K562 (cell line): ENCODE measurements at regions of chr7 and their contacts with region 1.

Region 1: DNA sequence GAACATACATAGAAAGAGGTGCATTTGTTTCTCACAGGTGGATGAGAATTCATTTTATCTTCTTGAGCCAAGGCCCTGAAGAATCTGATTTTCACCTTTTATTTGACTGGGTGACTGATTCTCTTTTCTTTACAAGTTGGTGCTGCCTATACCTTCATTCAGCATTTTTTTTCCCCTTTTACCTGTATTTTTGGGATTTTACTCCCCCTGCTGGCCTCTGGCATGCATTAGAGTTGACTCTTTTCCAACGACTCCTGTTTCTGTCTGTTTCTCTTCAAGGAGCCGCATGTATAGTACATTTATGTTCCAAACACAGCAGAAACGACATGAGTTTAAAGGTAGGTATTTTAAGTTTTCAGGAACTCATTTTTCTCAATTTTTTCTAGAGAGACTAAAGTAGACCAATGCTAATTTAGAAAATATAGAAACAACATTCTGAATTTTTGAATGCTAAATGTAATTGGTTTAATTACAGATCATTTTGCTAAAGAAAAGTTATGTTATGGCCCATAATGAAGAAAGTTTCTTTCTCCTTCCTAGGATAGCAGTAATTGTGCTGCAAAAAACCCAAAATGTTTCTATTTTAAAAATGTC is 149.8 kb upstream of the HDAC9 start:
- DNase-seq: peak; percentile 19 to 61 (median 27)
- ATAC-seq: peak; percentile 81
- H3K4me3 ChIP-seq: no peak overlapping the region
- H3K27ac ChIP-seq: no peak overlapping the region
- H3K4me1 ChIP-seq: no peaks in the 10 kb centered on the region
- H3K27me3 ChIP-seq: no peaks in the 10 kb centered on the region
- CTCF ChIP-seq: peak; percentile 69 to 82 (median 73)
- EP300 ChIP-seq: no peak
- POLR2A ChIP-seq: no peak
- RAD21 ChIP-seq: peak; percentile 88 to 90

Region 2: GRCh38 chr7:17706734-17707133 is 639.0 kb before region 1 on chr7:
- CTCF ChIA-PET with region 1: no interaction called
- POLR2A ChIA-PET with region 1: no interaction called
- in situ Hi-C with region 1: no loop called
- intact Hi-C with region 1: loop called (anchors 2 kb)
- DNase-seq: peak; percentile 31 to 70 (median 45)
- ATAC-seq: peak; percentile 91
- H3K4me3 ChIP-seq: no peak overlapping the region
- H3K27ac ChIP-seq: no peak overlapping the region
- H3K4me1 ChIP-seq: no peaks in the 10 kb centered on the region
- H3K27me3 ChIP-seq: no peaks in the 10 kb centered on the region
- CTCF ChIP-seq: peak; percentile 60 to 74 (median 62)
- EP300 ChIP-seq: no peak
- POLR2A ChIP-seq: no peak
- RAD21 ChIP-seq: peak; percentile 73 to 85

Region 3: GRCh38 chr7:17971411-17971810 is 374.3 kb before region 1 on chr7:
- CTCF ChIA-PET with region 1: interaction called, 5 read pairs
- POLR2A ChIA-PET with region 1: no interaction called
- in situ Hi-C with region 1: no loop called
- intact Hi-C with region 1: loop called (anchors 5 kb)
- DNase-seq: no peak
- ATAC-seq: no peak
- H3K4me3 ChIP-seq: no peak overlapping the region
- H3K27ac ChIP-seq: no peak overlapping the region
- H3K4me1 ChIP-seq: no peaks in the 10 kb centered on the region
- H3K27me3 ChIP-seq: no peaks in the 10 kb centered on the region
- CTCF ChIP-seq: peak in 1 of 3 experiments; percentile 27; a peak in 1 of 6 replicates
- EP300 ChIP-seq: no peak
- POLR2A ChIP-seq: no peak
- RAD21 ChIP-seq: 0 out of 4 replicates have a peak, but pooled peaks of 1 of the 2 experiments have one; percentile 9

Region 4: GRCh38 chr7:18064242-18064838 is 281.4 kb before region 1 on chr7:
- CTCF ChIA-PET with region 1: interaction called, 3 read pairs
- POLR2A ChIA-PET with region 1: no interaction called
- in situ Hi-C with region 1: loop called (anchors 25 kb)
- intact Hi-C with region 1: loop called (anchors 1 kb)
- DNase-seq: peak; percentile 23 to 54 (median 30)
- ATAC-seq: peak; percentile 95
- H3K4me3 ChIP-seq: no peak overlapping the region
- H3K27ac ChIP-seq: no peak overlapping the region
- H3K4me1 ChIP-seq: no peaks in the 10 kb centered on the region; a peak in 1 of 5 replicates
- H3K27me3 ChIP-seq: no peaks in the 10 kb centered on the region
- CTCF ChIP-seq: peak; percentile 65 to 75 (median 72)
- EP300 ChIP-seq: no peak
- POLR2A ChIP-seq: no peak
- RAD21 ChIP-seq: peak; percentile 69 to 92

Region 5: GRCh38 chr7:18119985-18120384 is 225.8 kb before region 1 on chr7:
- CTCF ChIA-PET with region 1: no interaction called
- POLR2A ChIA-PET with region 1: no interaction called
- in situ Hi-C with region 1: no loop called
- intact Hi-C with region 1: loop called (anchors 10 kb)
- DNase-seq: no peak
- ATAC-seq: peak; percentile 48
- H3K4me3 ChIP-seq: no peak overlapping the region
- H3K27ac ChIP-seq: no peak overlapping the region
- H3K4me1 ChIP-seq: no peaks in the 10 kb centered on the region; a peak in 1 of 5 replicates
- H3K27me3 ChIP-seq: no peaks in the 10 kb centered on the region
- CTCF ChIP-seq: peak in 2 of 3 experiments; percentile 19 to 28; a peak in 2 of 6 replicates
- EP300 ChIP-seq: no peak
- POLR2A ChIP-seq: no peak
- RAD21 ChIP-seq: peak in 1 of 2 experiments; percentile 22; a peak in 2 of 4 replicates

Region 6: DNA sequence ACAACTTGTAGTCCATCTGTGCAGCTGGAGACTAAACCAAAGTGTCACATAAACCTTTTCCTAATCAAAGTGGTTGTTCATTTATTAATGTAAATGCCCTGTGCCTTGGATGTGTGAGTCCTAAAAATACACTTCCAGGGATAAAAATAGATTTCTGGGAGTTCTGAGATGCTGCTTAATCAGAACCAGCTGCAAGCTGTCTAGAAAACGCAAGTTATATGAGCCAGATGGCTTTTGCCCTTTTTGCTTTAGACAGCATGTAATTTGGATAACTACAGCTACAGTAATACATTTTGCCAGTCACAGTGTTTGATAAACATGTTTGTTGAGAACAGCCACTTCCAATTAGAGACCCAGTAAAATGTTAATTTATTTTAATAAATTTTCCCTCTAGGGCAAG is 133.0 kb before region 1 on chr7:
- CTCF ChIA-PET with region 1: no interaction called
- POLR2A ChIA-PET with region 1: no interaction called
- in situ Hi-C with region 1: no loop called
- intact Hi-C with region 1: loop called (anchors 2 kb)
- DNase-seq: no peak
- ATAC-seq: no peak
- H3K4me3 ChIP-seq: no peak overlapping the region
- H3K27ac ChIP-seq: no peak overlapping the region
- H3K4me1 ChIP-seq: no peaks in the 10 kb centered on the region; a peak in 1 of 5 replicates
- H3K27me3 ChIP-seq: no peaks in the 10 kb centered on the region
- CTCF ChIP-seq: no peak
- EP300 ChIP-seq: no peak
- POLR2A ChIP-seq: no peak
- RAD21 ChIP-seq: no peak

Region 7: GRCh38 chr7:18520450-18521235 is 174.9 kb after region 1 on chr7:
- CTCF ChIA-PET with region 1: no interaction called
- POLR2A ChIA-PET with region 1: no interaction called
- in situ Hi-C with region 1: no loop called
- intact Hi-C with region 1: no loop called
- DNase-seq: no peak
- ATAC-seq: no peak
- H3K4me3 ChIP-seq: no peak overlapping the region
- H3K27ac ChIP-seq: no peak overlapping the region
- H3K4me1 ChIP-seq: no peaks in the 10 kb centered on the region
- H3K27me3 ChIP-seq: no peaks in the 10 kb centered on the region
- CTCF ChIP-seq: no peak
- EP300 ChIP-seq: no peak
- POLR2A ChIP-seq: no peak
- RAD21 ChIP-seq: no peak